GM18951 (cell line): ENCODE measurements at regions of chr4 and their contacts with region 1.

Region 1: GRCh38 chr4:147160908-147161513 is 215.3 kb upstream of the TTC29 start:
- POLR2A ChIP-seq: no peak

Region 2: DNA sequence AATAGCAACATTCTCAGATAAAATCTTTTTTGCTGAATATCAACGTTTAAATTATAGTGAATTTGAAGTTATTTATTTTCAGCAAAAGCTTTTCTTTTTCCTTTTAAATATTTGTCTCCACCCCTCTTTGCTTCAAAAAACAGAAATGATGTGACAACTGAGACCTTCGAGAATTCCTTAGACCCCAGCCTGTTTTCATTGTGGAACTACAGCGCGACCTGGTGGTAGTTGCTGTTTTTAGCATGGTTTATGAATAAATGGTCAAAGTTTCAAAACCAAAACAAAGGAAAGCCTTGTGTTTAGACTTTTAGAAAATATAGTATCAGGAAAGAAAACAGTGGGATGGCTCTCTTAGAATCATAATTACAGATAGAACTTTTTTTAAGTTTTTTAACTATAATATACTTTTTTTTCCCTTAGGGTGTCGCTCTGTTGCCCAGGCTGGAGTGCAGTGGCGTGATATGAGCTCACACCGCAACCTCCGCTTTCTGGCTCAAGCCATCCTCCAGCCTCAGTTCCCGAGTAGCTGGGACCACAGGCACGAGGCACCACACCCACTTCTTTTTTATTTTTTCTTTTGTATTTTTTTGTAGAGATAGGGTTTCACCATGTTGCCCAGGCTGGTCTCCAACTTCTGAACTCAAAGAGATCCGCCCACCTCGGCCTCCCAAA is 429.4 kb after region 1 on chr4:
- in situ Hi-C with region 1: loop called (anchors 25 kb)
- POLR2A ChIP-seq: no peak